Heart right ventricle (tissue), 16 donors: ENCODE measurements at regions of chr3 and their contacts with region 1.

Region 1: DNA sequence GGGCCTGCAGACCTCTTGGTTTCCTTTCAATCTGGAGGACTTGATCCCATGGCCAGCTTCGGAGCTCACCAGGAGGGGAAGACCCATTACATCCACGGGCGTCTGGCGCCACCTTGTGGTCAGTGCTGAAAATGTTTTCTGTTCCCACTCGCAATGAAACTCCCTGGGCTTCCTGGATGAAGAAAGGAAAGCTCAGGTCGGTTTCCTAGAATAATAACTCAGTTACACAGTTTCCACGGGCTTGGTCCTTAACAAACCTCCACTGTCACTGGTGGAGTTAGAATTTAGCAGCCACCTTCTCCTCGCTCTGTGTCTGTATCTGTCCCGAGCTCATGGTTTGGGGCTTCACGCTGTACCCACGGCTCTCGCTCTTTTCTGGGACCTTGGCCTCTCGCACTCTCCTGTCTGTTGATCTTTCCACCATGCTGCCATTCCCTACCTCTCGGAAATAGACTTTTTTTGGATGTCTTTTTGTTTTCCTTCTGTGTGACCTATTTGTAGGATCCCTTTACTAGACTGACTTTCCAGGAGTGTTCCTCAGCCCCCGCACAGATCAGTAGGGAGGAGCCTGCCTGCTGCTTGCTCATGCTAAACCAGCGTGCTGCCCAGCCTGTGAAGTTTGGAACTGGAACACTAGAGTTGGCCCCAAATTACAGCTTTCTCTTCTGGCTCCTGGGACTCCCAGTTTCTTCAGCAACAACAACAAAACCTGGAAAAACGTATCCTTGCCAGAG is 56.3 kb downstream of the IL20RB start:
- DNase-seq: peak; percentile 88 to 91
- ATAC-seq: peak; percentile 94 to 98 (median 96)
- H3K4me3 ChIP-seq: peak overlapping the region in 9 of 10 donors; percentile 30 to 60 (median 57)
- H3K27ac ChIP-seq: peak overlapping the region in 7 of 10 donors; percentile 59 to 77 (median 68)
- H3K4me1 ChIP-seq: peaks cover 0 to 22% (median 5%) of the 10 kb centered on the region in 9 donors
- H3K27me3 ChIP-seq: no peaks in the 10 kb centered on the region
- CTCF ChIP-seq: peak; percentile 86 to 95 (median 93)

Region 2: DNA sequence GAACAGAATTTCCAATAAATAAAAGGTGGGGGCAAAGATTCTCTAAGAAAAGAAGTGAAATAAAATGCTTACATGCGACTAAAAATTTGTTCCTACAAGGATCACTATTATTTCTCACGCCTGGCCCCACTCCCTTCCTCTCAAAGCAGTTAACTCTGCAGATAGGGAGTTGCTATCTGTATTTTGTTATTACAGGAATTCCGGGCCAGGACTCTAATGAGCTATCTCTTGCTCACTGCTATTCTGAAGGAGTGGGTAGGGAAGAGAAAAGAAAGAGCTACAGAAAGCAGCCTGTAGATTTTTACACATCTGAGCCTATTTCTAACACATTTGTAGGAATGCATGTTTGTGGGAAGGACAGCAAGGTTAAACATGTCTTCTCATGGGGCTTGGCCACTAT is 623.5 kb before region 1 on chr3:
- intact Hi-C with region 1: loop called in 7 of 10 experiments (anchors 2 to 10 kb)
- DNase-seq: no peak
- ATAC-seq: peak in 4 of 8 donors; percentile 25 to 69 (median 56)
- H3K4me3 ChIP-seq: no peak overlapping the region
- H3K27ac ChIP-seq: no peak overlapping the region
- H3K4me1 ChIP-seq: peaks cover 0 to 20% (median 0%) of the 10 kb centered on the region in 9 donors
- H3K27me3 ChIP-seq: no peaks in the 10 kb centered on the region
- CTCF ChIP-seq: no peak

Region 3: GRCh38 chr3:136396916-136397315 is 617.2 kb before region 1 on chr3:
- intact Hi-C with region 1: loop called in 6 of 10 experiments (anchors 2 to 10 kb)
- DNase-seq: no peak
- ATAC-seq: no peak
- H3K4me3 ChIP-seq: no peak overlapping the region
- H3K27ac ChIP-seq: no peak overlapping the region
- H3K4me1 ChIP-seq: peaks cover 0 to 3% (median 0%) of the 10 kb centered on the region in 9 donors
- H3K27me3 ChIP-seq: no peaks in the 10 kb centered on the region
- CTCF ChIP-seq: no peak

Region 4: GRCh38 chr3:136818769-136819391 is 195.2 kb before region 1 on chr3 and contains the start of gene SLC35G2:
- intact Hi-C with region 1: loop called in 7 of 10 experiments (anchors 1 to 5 kb)
- DNase-seq: peak; percentile 61 to 72
- ATAC-seq: peak; percentile 75 to 93 (median 88)
- H3K4me3 ChIP-seq: peak within 1 kb of the TSS; percentile 59 to 77 (median 72)
- H3K27ac ChIP-seq: peak within 1 kb of the TSS; percentile 80 to 93 (median 90)
- H3K4me1 ChIP-seq: peaks cover 0 to 32% (median 17%) of the 10 kb centered on the region in 9 donors
- H3K27me3 ChIP-seq: peaks cover 0 to 43% (median 0%) of the 10 kb centered on the region in 7 donors
- CTCF ChIP-seq: peak in 4 of 9 donors; percentile 6 to 34 (median 28)
- total RNA-seq, gene SLC35G2: 1.7 to 5.1 (median 2.4) TPM

Region 5: GRCh38 chr3:136861890-136862616 is 152.1 kb before region 1 on chr3 and contains the start of gene NCK1:
- intact Hi-C with region 1: loop called in 1 of 10 experiments (anchors 10 kb)
- DNase-seq: peak; percentile 98 to 99
- ATAC-seq: peak; percentile 98 to 100 (median 99)
- H3K4me3 ChIP-seq: peak within 1 kb of the TSS; percentile 58 to 98 (median 93)
- H3K27ac ChIP-seq: peak within 1 kb of the TSS; percentile 81 to 97 (median 94)
- H3K4me1 ChIP-seq: peaks cover 0 to 60% (median 35%) of the 10 kb centered on the region in 9 donors
- H3K27me3 ChIP-seq: no peaks in the 10 kb centered on the region
- CTCF ChIP-seq: peak in 4 of 9 donors; percentile 21 to 42 (median 31)
- total RNA-seq, gene NCK1: 17.0 to 31.8 (median 23.0) TPM

Region 6: GRCh38 chr3:136949708-136950107 is 64.4 kb before region 1 on chr3:
- intact Hi-C with region 1: loop called in 2 of 10 experiments (anchors 2 to 5 kb)
- DNase-seq: no peak
- ATAC-seq: no peak
- H3K4me3 ChIP-seq: no peak overlapping the region
- H3K27ac ChIP-seq: peak overlapping the region in 1 of 10 donors; percentile 17
- H3K4me1 ChIP-seq: peaks cover under 1 to 49% (median 20%) of the 10 kb centered on the region in 9 donors
- H3K27me3 ChIP-seq: no peaks in the 10 kb centered on the region
- CTCF ChIP-seq: peak in 4 of 9 donors; percentile 23 to 42 (median 33)

Region 7: GRCh38 chr3:136960836-136961518 is 53.1 kb before region 1 on chr3:
- intact Hi-C with region 1: no loop called
- DNase-seq: no peak
- ATAC-seq: no peak
- H3K4me3 ChIP-seq: no peak overlapping the region
- H3K27ac ChIP-seq: no peak overlapping the region
- H3K4me1 ChIP-seq: no peaks in the 10 kb centered on the region
- H3K27me3 ChIP-seq: no peaks in the 10 kb centered on the region
- CTCF ChIP-seq: no peak